A549 (cell line): ENCODE measurements at regions of chr19 and their contacts with region 1.

Region 1: DNA sequence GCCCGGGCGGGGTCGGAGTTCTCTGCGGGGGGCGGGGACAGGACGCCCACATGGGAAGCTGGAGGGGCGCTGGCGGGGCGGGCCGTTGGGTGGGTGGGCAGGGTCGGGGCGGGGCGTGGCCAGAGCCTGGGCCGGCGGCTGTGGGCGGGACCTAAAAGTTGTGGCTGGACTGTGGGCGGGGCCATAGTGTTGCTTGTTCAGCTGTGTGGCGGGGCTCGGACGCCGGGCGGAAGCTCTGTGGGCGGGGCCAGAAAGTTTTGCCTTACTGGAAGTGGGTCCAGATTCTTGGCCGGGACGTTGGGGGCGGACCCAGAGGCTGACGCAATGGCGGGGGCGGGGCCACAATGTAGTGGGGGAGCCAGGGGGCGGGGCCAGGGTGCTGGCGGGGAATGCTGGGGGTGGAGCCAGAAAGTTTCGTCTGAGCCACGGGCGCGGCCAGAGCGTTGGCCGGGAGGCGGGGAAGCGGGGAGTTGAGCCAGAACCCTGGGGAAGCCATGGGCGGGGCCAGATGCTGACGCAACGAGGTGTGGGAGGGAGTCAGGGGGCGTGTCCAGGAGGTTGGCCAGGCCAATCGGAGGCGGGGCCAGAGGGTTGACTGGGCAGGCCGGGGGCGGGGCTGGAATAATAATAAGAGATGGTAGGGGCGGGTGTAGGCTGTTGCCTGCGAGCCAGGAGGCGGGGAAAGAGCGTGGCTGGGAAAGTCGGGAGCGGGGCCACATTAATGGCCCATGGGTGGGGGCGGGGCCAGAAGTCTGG is 541 bp downstream of the CCDC9 start:
- DNase-seq: peak; percentile 99 to 100
- ATAC-seq: peak; percentile 71 to 85
- H3K4me3 ChIP-seq: peak overlapping the region; percentile 61
- H3K27ac ChIP-seq: peak overlapping the region; percentile 91 to 92
- H3K4me1 ChIP-seq: peaks cover 30% of the 10 kb centered on the region
- CTCF ChIP-seq: no peak
- EP300 ChIP-seq: no peak
- POLR2A ChIP-seq: no peak
- RAD21 ChIP-seq: no peak

Region 2: DNA sequence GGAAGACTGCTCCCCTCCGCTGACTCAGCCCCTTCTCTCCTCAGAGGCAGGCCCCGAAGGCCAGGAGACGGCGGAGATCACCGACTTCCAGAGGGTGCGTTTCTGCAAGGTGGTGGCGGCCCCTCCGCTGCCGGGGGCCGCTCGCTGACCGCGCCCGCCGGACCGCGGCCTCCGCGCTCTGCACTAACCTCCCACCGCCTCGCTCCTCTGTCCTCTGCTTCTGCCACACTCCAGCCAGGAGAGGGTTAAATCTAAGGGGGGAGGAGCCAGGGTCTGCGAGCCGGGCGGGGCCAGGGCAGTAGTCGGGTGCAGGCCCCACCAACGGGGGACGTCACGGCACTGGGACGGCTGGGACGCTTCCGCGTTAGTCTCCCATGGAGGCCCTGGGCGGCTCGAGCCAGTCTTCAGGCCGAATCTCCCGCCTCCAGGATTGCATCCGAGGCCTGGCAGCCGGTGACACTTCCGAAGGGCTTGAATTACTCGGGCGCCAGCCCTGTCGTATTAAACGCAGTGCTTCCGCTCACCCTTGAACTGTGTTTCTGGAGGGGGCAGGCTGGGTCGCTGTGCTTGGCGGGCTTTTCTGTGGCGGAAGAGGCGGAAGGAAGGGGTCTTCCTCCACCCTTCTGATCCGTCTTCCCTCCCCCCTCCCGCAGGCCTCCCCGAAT is 16.6 kb after region 1 on chr19:
- CTCF ChIA-PET with region 1: interaction called, 8 read pairs
- POLR2A ChIA-PET with region 1: interaction called, 77 read pairs
- DNase-seq: peak; percentile 96
- ATAC-seq: peak; percentile 66 to 89
- H3K4me3 ChIP-seq: peak overlapping the region; percentile 59
- H3K27ac ChIP-seq: peak overlapping the region; percentile 80 to 90
- H3K4me1 ChIP-seq: peaks cover 15% of the 10 kb centered on the region
- CTCF ChIP-seq: no peak
- EP300 ChIP-seq: no peak
- POLR2A ChIP-seq: peak; percentile 41
- RAD21 ChIP-seq: no peak